Activated CD8-positive, alpha-beta memory T cell treated with anti-CD3 and anti-CD28 coated beads, Interleukin-2, amount 10 ng/mL, durations not matched to agents 7 days and 5 days (primary cell): ENCODE measurements at regions of chr9 and their contacts with region 1.

Region 1: DNA sequence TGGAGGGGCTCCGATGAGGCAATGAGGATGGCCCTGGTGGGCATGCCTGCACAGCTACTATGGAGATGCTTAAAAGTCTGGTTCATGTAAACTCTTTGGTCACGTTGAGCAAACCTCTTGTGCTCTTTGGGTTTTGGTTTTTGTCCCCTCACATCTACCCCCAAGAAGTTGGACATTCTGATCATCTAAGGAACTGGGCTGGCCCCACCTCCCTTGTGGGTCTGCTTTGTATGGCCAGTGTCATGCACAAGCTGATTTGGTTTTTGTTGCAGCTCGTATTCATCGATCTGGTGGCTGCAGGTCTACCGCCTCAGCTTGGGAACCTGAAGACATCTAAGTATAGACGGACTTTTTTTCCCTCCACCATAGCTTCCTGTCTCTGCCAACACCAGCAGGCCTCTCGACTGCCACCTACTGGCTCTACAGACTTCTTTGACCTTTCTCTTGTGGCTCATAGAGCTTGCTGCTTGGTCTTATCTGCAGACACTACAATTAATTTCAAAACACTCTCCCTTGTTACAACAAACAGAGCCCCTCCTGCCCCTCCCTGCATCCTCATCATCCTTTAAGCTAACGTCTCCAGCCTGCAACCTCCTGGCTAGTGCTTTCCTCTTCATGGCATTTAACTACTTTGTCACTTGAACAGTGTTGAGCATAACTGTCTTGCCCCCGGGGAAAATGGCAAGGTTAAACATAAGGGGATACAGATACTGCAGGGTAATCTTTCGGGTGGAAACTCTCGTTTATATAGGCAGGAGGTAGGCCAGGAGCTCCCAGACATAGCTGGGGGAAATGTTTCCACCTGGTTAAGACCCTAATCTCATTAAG is 34.5 kb downstream of the TSTD2 start:
- DNase-seq: peak; percentile 84
- ATAC-seq: peak; percentile 92
- H3K4me3 Mint-ChIP-seq: no peak overlapping the region
- H3K27ac Mint-ChIP-seq: no peak overlapping the region
- H3K4me1 Mint-ChIP-seq: peaks cover 8% of the 10 kb centered on the region
- H3K27me3 Mint-ChIP-seq: no peaks in the 10 kb centered on the region

Region 2: GRCh38 chr9:96854073-96854876 is 744.4 kb before region 1 on chr9 and contains the start of gene ZNF782:
- CTCF ChIA-PET with region 1: interaction called, 24 read pairs
- DNase-seq: peak; percentile 92
- ATAC-seq: peak; percentile 96
- H3K4me3 Mint-ChIP-seq: peak within 1 kb of the TSS; percentile 98
- H3K27ac Mint-ChIP-seq: peak within 1 kb of the TSS; percentile 97
- H3K4me1 Mint-ChIP-seq: peaks cover 31% of the 10 kb centered on the region
- H3K27me3 Mint-ChIP-seq: peaks cover 23% of the 10 kb centered on the region
- total RNA-seq, gene ZNF782: 4.9 to 5.0 TPM

Region 3: GRCh38 chr9:97398999-97399758 is 199.5 kb before region 1 on chr9:
- CTCF ChIA-PET with region 1: interaction called, 10 read pairs
- DNase-seq: peak; percentile 72
- ATAC-seq: no peak
- H3K4me3 Mint-ChIP-seq: no peak overlapping the region
- H3K27ac Mint-ChIP-seq: no peak overlapping the region
- H3K4me1 Mint-ChIP-seq: peaks cover 40% of the 10 kb centered on the region
- H3K27me3 Mint-ChIP-seq: peaks cover 66% of the 10 kb centered on the region

Region 4: DNA sequence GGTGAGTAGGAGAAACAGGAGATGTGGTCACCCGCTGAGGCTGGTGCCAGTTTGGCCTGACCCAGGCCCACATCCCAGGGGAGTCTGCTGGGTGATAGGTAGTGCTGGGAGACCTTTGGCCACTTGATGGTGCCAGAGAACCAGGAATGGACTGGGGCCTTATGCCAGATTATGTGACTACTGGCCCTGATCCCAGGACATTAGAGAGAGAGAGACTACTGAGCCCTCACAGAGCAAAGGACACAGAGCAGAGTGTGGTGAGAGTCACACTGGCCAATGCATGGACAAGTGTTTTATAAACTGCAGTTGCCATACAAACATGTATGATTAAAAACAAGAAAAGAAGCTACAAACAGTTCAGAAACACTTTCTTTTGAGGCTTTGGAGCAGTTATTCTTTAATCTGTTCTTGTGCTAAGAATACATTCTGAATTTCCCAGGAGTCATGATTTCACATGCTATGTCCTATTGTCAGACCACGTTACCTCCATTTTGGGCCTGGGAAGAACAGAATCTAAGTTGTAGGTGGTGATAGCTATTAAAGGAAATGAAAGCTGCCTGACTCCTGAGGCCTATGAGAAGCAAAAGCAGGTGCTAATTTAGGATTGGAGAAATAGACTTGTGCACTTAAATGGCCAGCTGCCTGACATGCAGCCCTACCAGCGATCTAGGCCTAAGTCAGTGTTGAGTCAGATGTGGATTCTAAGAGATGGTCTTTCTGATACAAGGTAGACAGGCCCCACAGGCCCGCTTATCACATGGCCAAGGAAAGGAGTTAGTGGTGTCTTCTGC is 129.8 kb before region 1 on chr9:
- CTCF ChIA-PET with region 1: interaction called, 107 read pairs
- DNase-seq: peak; percentile 60
- ATAC-seq: peak; percentile 65
- H3K4me3 Mint-ChIP-seq: no peak overlapping the region
- H3K27ac Mint-ChIP-seq: no peak overlapping the region
- H3K4me1 Mint-ChIP-seq: no peaks in the 10 kb centered on the region
- H3K27me3 Mint-ChIP-seq: no peaks in the 10 kb centered on the region

Region 5: DNA sequence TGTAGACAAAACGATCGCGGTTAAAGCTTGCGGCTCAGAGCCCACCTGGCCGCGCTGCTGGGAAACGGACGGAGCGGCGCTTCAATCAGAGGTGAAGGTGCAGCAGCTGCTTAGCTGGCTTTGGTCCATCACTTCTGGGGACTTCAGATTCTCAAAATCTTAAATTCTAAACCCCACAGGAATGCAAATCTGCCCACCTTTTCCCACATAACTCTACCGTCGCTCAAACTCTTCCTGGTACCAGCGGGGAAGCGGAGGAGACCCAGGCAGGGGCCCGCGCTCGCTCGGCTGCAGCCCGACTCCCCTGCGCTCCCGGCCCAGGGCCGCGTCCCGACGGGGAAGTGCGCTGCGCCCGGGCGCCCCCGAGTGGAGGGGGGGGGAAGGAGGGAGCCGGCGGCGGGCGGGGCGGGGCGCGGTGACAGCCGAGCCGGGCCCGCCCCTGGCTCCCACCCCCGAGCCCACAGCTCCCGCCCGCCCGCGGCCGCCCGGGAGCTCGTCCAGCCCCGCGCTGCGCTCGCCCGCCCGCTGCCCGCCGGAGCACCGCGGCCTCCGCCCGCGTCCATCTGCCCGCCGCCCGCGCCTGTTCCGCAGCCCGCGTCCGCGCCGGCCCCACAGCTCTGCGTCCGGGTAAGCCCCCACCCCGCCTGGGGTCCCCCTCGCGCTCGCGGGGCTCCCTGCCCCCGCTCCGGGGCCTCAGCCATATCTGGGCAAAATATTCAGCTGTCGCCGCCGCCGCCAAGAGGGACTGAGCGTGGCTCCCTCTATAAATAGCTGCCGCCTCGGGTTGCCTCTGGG is 97.3 kb before region 1 on chr9 and contains the start of gene TMOD1:
- CTCF ChIA-PET with region 1: interaction called, 30 read pairs
- DNase-seq: peak; percentile 52
- ATAC-seq: peak; percentile 86
- H3K4me3 Mint-ChIP-seq: peak within 1 kb of the TSS; percentile 63
- H3K27ac Mint-ChIP-seq: no peak within 1 kb of the TSS
- H3K4me1 Mint-ChIP-seq: peaks cover 18% of the 10 kb centered on the region
- H3K27me3 Mint-ChIP-seq: peaks cover 50% of the 10 kb centered on the region
- total RNA-seq, gene TMOD1: 0.88 to 1.0 TPM

Region 6: GRCh38 chr9:97551308-97551707 is 47.4 kb before region 1 on chr9:
- CTCF ChIA-PET with region 1: no interaction called
- DNase-seq: no peak
- ATAC-seq: no peak
- H3K4me3 Mint-ChIP-seq: no peak overlapping the region
- H3K27ac Mint-ChIP-seq: no peak overlapping the region
- H3K4me1 Mint-ChIP-seq: peaks cover 1% of the 10 kb centered on the region
- H3K27me3 Mint-ChIP-seq: peaks cover 46% of the 10 kb centered on the region

Region 7: GRCh38 chr9:97615439-97616072 is 16.9 kb after region 1 on chr9:
- CTCF ChIA-PET with region 1: interaction called, 45 read pairs
- DNase-seq: peak; percentile 75
- ATAC-seq: peak; percentile 53
- H3K4me3 Mint-ChIP-seq: no peak overlapping the region
- H3K27ac Mint-ChIP-seq: no peak overlapping the region
- H3K4me1 Mint-ChIP-seq: peaks cover 16% of the 10 kb centered on the region
- H3K27me3 Mint-ChIP-seq: no peaks in the 10 kb centered on the region

Region 8: GRCh38 chr9:97658707-97659106 is 60.0 kb after region 1 on chr9:
- CTCF ChIA-PET with region 1: no interaction called
- DNase-seq: no peak
- ATAC-seq: no peak
- H3K4me3 Mint-ChIP-seq: no peak overlapping the region
- H3K27ac Mint-ChIP-seq: no peak overlapping the region
- H3K4me1 Mint-ChIP-seq: no peaks in the 10 kb centered on the region
- H3K27me3 Mint-ChIP-seq: no peaks in the 10 kb centered on the region